Right ventricle myocardium superior (tissue), 1 donor: ENCODE measurements at regions of chr9 and their contacts with region 1.

Region 1: DNA sequence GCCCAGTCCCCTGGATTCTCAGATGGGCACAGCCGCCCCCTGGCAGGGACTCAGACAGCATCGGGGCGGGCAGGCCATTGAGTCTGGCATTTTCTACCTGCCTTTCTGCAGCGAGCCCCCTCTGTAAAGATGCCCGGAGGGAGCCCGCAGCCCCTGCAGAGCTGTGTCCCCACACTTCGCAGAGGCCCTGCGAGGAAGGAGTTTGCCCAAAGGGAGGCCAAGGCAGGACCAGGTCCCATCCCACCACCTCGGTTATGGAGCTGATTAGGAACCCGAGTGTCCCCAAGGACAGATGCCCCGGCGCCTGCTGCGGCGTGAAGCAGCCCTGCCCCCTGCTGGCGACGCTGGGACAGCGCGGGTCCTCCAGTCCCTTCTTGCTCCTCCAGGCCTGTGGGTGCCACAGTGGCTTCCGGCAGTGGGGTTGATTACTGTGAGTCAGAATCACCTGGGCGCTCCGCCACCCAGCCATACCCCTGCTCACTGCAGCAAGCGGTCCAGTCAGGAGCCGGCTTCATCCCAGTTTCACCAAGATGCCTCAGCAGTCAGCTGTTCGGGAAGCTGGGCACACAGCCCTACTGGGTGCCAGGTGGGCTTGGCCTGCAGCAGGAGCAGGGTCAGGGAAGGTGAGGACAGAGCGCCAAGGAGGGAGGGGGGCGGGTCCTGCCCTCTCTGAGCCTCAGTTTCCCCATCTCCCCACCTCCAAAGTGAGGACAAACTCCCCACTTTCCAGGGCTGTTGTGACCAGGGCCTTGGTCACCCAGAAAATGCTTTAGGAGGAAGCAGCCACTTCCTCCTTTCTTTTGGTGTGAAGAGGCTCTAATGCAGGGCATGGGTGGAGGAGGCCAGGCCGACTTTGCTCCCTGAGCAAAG is 117.1 kb downstream of the RXRA start:
- DNase-seq: peak; percentile 92
- ATAC-seq: peak; percentile 87

Region 2: DNA sequence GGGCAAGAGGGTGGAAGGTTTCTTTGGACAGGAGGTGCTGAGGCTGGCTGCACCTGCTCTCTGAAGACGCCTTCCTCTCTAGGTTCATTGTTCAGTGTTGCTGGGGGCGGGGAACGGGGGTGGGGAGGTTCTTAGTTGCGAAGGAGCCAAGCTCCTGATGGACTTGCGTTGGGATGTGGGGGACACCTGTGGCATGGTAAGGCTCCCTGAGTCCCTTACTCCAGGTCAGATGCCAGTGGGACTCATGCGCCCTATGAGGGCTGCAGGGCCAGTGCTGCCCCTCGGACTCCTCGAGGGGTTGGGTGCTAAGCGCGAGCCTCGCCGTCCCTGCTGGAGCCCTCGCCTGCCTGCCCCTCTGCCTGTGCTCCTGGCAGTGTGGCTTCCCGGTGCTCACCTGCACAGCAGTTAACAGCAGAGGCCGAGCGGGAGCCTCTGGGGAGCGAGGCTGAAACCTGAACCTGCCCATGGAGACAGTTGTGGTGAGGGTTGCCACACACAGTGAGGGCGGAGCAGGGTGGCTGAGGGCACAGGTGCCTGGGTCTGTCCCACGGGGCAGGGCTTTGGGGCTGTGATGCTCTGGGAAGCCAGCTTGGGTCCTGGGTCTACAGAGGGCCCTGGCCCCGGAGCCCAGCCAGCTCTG is 284.5 kb before region 1 on chr9:
- intact Hi-C with region 1: no loop called
- DNase-seq: no peak
- ATAC-seq: no peak

Region 3: GRCh38 chr9:134171316-134172197 is 271.8 kb before region 1 on chr9:
- intact Hi-C with region 1: loop called (anchors 2 kb)
- DNase-seq: peak; percentile 54
- ATAC-seq: peak; percentile 21